Dorsolateral prefrontal cortex (tissue), 120 donors: ENCODE measurements at regions of chr3 and their contacts with region 1.

Region 1: DNA sequence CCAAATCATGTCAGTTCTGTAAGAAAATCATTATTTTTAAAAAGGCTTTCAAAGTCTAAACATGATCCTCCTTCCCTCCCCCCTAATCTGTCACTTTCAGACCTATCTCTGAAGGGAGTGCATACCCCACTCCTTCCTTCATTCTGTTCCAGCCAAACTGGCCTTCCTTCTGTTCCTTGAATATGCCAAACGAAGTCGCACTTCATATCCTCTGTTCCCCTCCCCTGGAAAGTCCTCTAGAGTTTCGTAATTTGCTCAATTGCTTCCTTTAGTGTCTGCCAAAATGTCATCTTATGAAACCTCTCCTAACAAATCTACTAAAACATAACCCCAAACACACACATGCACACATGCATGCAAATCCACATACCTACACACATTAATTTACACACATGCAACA is 69.5 kb upstream of the TUSC7 start:
- DNase-seq: no peak
- H3K4me3 ChIP-seq: no peak overlapping the region
- H3K27ac ChIP-seq: no peak overlapping the region
- H3K27me3 ChIP-seq: no peaks in the 10 kb centered on the region
- CTCF ChIP-seq: no peak

Region 2: GRCh38 chr3:116591236-116591635 is 48.9 kb before region 1 on chr3:
- intact Hi-C with region 1: no loop called
- DNase-seq: no peak
- H3K4me3 ChIP-seq: no peak overlapping the region
- H3K27ac ChIP-seq: no peak overlapping the region
- H3K27me3 ChIP-seq: no peaks in the 10 kb centered on the region
- CTCF ChIP-seq: no peak

Region 3: GRCh38 chr3:116716490-116716889 is 76.4 kb after region 1 on chr3:
- intact Hi-C with region 1: loop called in 1 of 2 experiments (anchors 5 kb)
- DNase-seq: no peak
- H3K4me3 ChIP-seq: no peak overlapping the region
- H3K27ac ChIP-seq: no peak overlapping the region
- H3K27me3 ChIP-seq: no peaks in the 10 kb centered on the region
- CTCF ChIP-seq: no peak

Region 4: DNA sequence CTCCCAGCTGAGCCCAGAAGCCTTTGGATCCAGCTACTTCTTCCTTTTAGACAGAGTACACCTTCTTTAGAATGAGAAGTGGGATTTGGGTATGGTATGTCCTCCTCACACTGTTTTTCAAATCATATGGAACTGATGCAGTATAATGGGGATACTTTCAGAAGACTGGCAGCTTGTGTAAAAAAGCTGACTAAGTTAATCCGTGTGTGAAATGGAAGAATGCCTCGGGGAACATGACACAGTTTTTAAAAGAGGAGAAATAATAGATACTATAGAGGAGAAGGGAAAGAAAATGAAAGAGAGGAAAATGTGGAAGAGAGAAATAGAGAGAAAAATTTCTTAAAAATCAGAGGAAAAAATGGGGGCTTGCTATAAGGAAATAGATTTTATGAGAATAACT is 117.2 kb after region 1 on chr3:
- intact Hi-C with region 1: loop called (anchors 2 to 10 kb)
- DNase-seq: no peak
- H3K4me3 ChIP-seq: no peak overlapping the region
- H3K27ac ChIP-seq: no peak overlapping the region
- H3K27me3 ChIP-seq: no peaks in the 10 kb centered on the region
- CTCF ChIP-seq: no peak